Dorsolateral prefrontal cortex (tissue), 120 donors: ENCODE measurements at regions of chr11 and their contacts with region 1.

Region 1: GRCh38 chr11:43895601-43896000 is 15.0 kb downstream of the ALKBH3 start:
- DNase-seq: peak in 1 of 10 donors; percentile 22
- H3K4me3 ChIP-seq: peak overlapping the region in 9 of 59 donors; percentile 4 to 26 (median 10)
- H3K27ac ChIP-seq: peak overlapping the region in 57 of 59 donors; percentile 4 to 92 (median 76)
- H3K27me3 ChIP-seq: no peaks in the 10 kb centered on the region
- CTCF ChIP-seq: peak in 2 of 56 donors; percentile 16 to 26

Region 2: GRCh38 chr11:43880640-43881159 is 14.9 kb before region 1 on chr11 and contains the start of gene ALKBH3:
- intact Hi-C with region 1: no loop called
- DNase-seq: peak; percentile 86 to 95 (median 92)
- H3K4me3 ChIP-seq: peak within 1 kb of the TSS; percentile 62 to 100 (median 90)
- H3K27ac ChIP-seq: peak within 1 kb of the TSS in 36 of 59 donors; percentile 4 to 90 (median 55)
- H3K27me3 ChIP-seq: peaks cover 0 to 34% (median 8%) of the 10 kb centered on the region in 45 donors
- CTCF ChIP-seq: peak in 52 of 56 donors; percentile 16 to 70 (median 46)
- total RNA-seq, gene ALKBH3: 16.3 to 51.9 (median 31.0) TPM

Region 3: GRCh38 chr11:43944761-43945311 is 49.2 kb after region 1 on chr11:
- intact Hi-C with region 1: loop called (anchors 1 to 5 kb)
- DNase-seq: peak in 6 of 10 donors; percentile 63 to 78 (median 66)
- H3K4me3 ChIP-seq: peak overlapping the region in 57 of 59 donors; percentile 52 to 79 (median 67)
- H3K27ac ChIP-seq: peak overlapping the region in 47 of 59 donors; percentile 8 to 95 (median 84)
- H3K27me3 ChIP-seq: peaks cover 0 to 34% (median 4%) of the 10 kb centered on the region in 45 donors
- CTCF ChIP-seq: peak; percentile 53 to 87 (median 74)

Region 4: GRCh38 chr11:44036811-44037657 is 141.4 kb after region 1 on chr11:
- intact Hi-C with region 1: loop called (anchors 1 to 5 kb)
- DNase-seq: peak; percentile 67 to 92 (median 85)
- H3K4me3 ChIP-seq: peak overlapping the region in 3 of 59 donors; percentile 1 to 10 (median 9)
- H3K27ac ChIP-seq: peak overlapping the region in 40 of 59 donors; percentile 1 to 77 (median 62)
- H3K27me3 ChIP-seq: no peaks in the 10 kb centered on the region
- CTCF ChIP-seq: peak; percentile 60 to 97 (median 92)